ENCODE measurements at regions of chr1 and their contacts with region 1.

Region 1: DNA sequence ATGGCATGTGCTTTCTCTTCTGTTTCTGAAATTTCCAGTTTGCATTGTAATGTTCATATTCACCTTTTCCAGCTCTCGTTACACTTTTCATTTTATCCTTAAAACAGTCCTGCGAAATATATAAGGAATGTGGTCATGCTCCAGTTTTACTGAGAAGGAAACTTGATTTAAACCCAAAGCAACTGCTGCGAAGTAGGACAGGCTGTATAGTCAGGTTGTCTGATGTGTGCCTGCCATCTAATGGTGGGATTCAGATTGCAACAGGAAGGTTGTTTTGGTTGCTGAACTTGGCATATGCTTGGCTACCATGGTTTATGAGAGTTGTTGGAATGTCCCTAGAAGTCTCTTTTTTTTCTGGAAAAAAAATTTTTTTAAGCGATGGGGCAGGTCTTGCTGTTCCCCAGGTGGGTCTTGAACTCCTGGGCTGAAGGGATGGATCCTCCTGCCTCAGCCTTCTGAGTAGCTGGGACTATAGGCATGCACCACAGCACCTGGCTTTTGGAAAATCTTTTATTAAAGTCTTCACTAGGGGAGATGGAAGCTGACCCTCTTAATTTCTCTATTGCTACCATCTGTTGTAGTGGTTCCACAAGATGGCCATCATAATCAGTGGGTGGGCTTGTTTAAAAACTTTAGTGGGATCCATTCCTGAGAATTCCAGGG is 86.9 kb downstream of the UCK2 start:
- DNase-seq: peak; percentile 77
- H3K4me3 ChIP-seq: no peak overlapping the region
- H3K27ac ChIP-seq: no peak overlapping the region
- H3K4me1 ChIP-seq: no peaks in the 10 kb centered on the region
- H3K27me3 ChIP-seq: no peaks in the 10 kb centered on the region
- CTCF ChIP-seq: peak; percentile 56 to 93 (median 83)
- POLR2A ChIP-seq: no peak

Region 2: DNA sequence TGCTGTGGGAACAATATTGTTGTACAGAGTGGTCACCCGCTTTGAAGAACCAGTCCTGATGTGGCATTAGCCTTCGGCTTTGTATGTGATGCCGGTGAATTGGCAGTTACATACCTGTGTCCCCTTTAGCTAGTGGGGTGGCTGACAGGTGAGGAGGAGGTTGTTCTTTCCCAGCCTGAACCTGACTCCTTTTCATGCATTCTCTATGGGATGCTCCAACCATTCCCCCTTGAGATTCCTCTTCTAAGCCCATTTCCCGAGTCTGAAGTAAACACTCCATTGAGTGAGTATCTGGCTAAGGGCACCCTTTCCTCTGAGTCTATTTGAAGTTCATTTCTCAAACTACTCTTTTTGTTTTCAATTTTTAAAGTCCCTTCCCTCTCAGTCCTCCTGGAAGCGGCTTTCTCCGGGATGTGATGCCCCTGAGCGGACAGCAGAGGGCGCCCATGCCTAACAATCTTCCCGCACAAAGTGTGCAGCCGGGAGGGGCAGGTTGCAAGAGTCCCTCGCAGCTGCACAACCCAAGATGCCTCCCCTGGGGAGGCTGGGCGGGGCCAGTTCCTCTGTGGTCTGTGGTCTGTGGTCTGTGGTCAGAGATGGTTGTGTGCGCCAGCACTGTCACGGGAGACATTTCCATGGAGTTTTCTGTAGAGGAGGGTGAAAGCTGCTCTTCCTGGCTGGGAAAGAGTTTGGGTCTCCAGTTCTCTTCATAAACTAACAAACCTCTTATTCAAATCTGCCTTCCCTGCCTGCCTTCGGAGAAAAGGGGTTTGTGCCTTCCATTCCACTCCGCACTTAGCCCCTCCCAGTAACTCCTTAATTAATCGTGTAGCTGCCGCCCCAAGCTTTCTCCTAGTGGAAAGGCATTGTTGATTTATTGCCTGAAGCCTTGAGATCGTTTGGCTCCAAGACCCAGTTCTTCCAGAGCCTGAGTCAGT is 521.4 kb before region 1 on chr1:
- intact Hi-C with region 1: loop called (anchors 5 kb)
- DNase-seq: peak; percentile 64
- H3K4me3 ChIP-seq: no peak overlapping the region
- H3K27ac ChIP-seq: no peak overlapping the region
- H3K4me1 ChIP-seq: no peaks in the 10 kb centered on the region
- H3K27me3 ChIP-seq: no peaks in the 10 kb centered on the region
- CTCF ChIP-seq: peak; percentile 77 to 87 (median 84)
- POLR2A ChIP-seq: no peak

Region 3: GRCh38 chr1:165603810-165604209 is 310.5 kb before region 1 on chr1:
- intact Hi-C with region 1: loop called (anchors 2 kb)
- DNase-seq: no peak
- H3K4me3 ChIP-seq: no peak overlapping the region
- H3K27ac ChIP-seq: no peak overlapping the region
- H3K4me1 ChIP-seq: no peaks in the 10 kb centered on the region
- H3K27me3 ChIP-seq: no peaks in the 10 kb centered on the region
- CTCF ChIP-seq: no peak
- POLR2A ChIP-seq: no peak

Region 4: DNA sequence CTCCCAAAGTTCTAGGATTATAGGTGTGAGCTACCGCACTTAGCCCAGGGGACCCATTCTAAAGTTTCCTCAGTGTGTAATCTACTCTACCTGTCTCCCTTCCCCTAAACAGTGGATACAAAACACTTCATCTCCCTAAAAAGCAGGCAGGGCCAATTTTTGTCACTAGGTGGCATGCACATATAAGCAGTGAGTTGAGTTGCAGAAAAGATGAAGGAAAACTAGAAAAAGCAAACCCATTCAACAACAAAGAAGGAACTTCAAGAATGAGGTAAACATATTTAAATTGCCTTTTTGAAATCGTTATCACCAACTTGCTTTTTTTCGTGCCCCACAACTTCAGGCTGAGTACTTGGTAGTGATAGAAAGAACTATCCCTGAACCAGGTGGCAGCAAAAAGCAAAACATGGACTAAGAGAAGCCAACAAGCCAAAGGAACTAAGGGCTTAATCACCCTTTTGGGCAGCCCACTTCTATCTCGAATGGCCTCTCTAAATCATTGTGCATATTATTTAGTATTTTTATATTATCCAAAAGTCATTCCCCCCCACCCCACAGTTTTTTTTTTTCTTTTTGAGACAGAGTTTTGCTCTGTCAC is 196.2 kb before region 1 on chr1:
- intact Hi-C with region 1: loop called (anchors 5 kb)
- DNase-seq: peak; percentile 45
- H3K4me3 ChIP-seq: no peak overlapping the region
- H3K27ac ChIP-seq: no peak overlapping the region
- H3K4me1 ChIP-seq: no peaks in the 10 kb centered on the region
- H3K27me3 ChIP-seq: no peaks in the 10 kb centered on the region
- CTCF ChIP-seq: peak in 2 of 4 experiments; percentile 69 to 74
- POLR2A ChIP-seq: no peak

Region 5: DNA sequence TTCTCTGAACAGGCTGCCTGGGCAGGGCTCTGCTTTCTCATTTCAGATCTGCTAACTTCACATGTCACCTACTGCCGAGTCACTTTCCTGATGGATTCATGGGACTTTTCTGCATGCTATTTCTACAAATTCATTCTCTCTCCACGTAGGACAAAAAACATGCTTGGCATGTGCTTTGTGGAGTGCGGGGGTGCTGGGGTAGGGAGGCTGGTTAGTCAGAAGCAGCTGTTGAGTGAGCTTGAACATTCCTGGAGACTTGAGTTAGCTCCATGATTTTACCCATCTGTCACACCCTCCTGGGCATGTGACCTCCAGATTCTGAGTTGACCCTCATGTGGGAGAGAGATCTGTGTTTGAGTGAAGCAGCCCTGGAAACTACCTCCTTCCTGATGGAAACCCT is 15.4 kb before region 1 on chr1:
- intact Hi-C with region 1: loop called (anchors 2 kb)
- DNase-seq: no peak
- H3K4me3 ChIP-seq: no peak overlapping the region
- H3K27ac ChIP-seq: peak overlapping the region in 1 of 2 donors; percentile 28
- H3K4me1 ChIP-seq: no peaks in the 10 kb centered on the region
- H3K27me3 ChIP-seq: no peaks in the 10 kb centered on the region
- CTCF ChIP-seq: no peak
- POLR2A ChIP-seq: no peak

Measured in prostate gland (tissue), 2 donors.